ENCODE measurements at regions of chr7 and their contacts with region 1.

Region 1: GRCh38 chr7:111059833-111060232 is 31.1 kb upstream of the LRRN3 start:
- DNase-seq: no peak
- H3K4me3 ChIP-seq: no peak overlapping the region
- CTCF ChIP-seq: no peak
- POLR2A ChIP-seq: no peak

Region 2: DNA sequence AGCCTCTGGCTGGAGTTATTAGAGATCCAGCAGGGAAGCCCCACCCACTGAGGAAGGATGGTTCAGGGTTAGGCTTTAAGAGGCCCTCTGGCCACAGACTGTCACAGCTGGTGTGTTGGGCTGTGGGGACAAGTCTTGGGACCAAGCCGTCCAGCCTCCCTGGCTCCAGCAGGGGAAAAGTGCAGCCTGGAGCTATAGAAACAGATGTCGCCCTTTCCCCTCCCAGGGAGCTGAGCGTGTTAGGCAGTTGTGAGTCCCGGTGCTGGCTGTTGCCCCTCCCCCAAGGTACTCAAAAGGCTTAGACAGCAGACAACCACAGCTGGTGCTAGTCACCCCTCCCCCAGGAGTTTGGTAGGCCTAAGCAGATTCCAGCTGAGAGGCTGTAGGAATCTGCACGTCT is 1587.0 kb after region 1 on chr7:
- intact Hi-C with region 1: loop called (anchors 10 kb)
- DNase-seq: no peak
- H3K4me3 ChIP-seq: no peak overlapping the region
- CTCF ChIP-seq: no peak
- POLR2A ChIP-seq: no peak